Lower leg skin (tissue), 4 donors: ENCODE measurements at regions of chr2 and their contacts with region 1.

Region 1: GRCh38 chr2:128428415-128428814 is 109.7 kb upstream of the HS6ST1 start:
- DNase-seq: no peak
- H3K4me3 ChIP-seq: no peak overlapping the region
- CTCF ChIP-seq: no peak
- POLR2A ChIP-seq: no peak

Region 2: DNA sequence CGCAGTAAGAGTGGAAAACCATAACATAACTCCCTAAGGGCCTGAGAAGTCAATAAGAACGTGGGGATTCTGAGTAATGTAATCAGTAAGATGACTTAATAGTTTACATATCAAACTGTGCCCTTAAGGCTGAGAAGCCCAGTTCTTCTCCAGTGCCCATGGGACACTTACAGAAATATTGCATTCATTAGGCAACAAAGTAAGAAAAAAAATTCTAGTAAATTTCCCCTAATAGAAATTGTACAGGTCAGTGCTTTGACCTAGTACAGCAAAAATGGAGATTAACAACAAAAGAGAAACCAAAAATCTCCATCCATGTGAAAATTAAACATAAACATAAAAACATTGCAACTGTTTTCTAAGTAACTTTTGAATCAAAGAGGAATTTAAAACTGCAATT is 30.1 kb after region 1 on chr2:
- intact Hi-C with region 1: loop called (anchors 1 kb)
- DNase-seq: no peak
- H3K4me3 ChIP-seq: no peak overlapping the region
- CTCF ChIP-seq: no peak
- POLR2A ChIP-seq: no peak